CD8-positive, alpha-beta memory T cell (primary cell): ENCODE measurements at regions of chr12 and their contacts with region 1.

Region 1: DNA sequence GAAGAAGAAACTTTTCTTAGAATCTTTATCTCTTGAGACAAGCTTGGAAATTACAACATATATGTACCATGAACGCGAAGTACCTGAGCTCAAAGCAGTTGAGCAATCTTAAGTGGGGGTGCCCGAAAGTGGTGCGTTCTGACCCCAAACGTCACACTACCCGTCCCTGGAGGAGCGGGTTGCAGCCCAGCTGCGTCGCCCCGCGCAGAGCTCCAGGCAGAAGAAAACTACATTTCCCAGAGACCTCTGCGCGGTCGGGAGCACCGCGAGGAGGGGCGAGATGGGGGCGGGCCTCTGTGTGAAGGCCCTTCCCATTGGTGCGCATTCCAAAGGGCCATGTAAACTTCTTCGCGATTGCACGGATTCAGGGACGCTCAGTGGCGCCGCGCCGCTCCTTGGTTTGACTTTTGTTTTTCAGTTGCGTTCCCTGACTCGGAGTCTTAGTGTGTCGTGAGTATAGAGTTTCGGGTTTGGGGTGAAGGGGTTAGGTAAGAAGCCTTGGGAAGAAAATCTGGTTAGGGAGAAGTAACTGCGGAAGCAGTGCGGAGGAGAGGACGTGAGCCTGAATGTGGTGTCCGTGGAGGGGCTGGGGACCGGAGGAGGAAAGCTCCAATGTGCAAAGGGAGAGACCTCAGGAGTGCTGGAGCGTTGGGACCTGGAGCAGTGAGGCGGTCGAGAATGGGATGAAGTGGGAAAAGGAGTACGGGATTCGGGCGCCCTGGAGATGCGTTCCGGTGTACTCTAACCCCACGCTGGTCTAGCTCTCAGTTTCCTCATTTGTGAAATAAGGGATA is at the start of gene CCDC77:
- DNase-seq: peak; percentile 86 to 96 (median 93)
- H3K4me3 ChIP-seq: peak within 1 kb of the TSS; percentile 90
- H3K4me3 Mint-ChIP-seq: no peak within 1 kb of the TSS
- H3K27ac ChIP-seq: peak within 1 kb of the TSS; percentile 62
- H3K27ac Mint-ChIP-seq: no peak within 1 kb of the TSS
- H3K4me1 ChIP-seq: peaks cover 14% of the 10 kb centered on the region
- H3K4me1 Mint-ChIP-seq: no peaks in the 10 kb centered on the region
- H3K27me3 ChIP-seq: no peaks in the 10 kb centered on the region
- H3K27me3 Mint-ChIP-seq: peaks cover 0 to 1% of the 10 kb centered on the region in 2 donors
- total RNA-seq, gene CCDC77: 14.0 to 14.7 TPM

Region 2: GRCh38 chr12:389139-390096 is 12.0 kb before region 1 on chr12 and contains the start of gene KDM5A:
- CTCF ChIA-PET with region 1: interaction called, 25 read pairs
- POLR2A ChIA-PET with region 1: interaction called, 33 read pairs
- DNase-seq: peak; percentile 86 to 94 (median 92)
- H3K4me3 ChIP-seq: peak within 1 kb of the TSS; percentile 78
- H3K4me3 Mint-ChIP-seq: peak within 1 kb of the TSS; percentile 93 to 100 (median 97)
- H3K27ac ChIP-seq: peak within 1 kb of the TSS; percentile 94
- H3K27ac Mint-ChIP-seq: peak within 1 kb of the TSS; percentile 98 to 100 (median 99)
- H3K4me1 ChIP-seq: peaks cover 44% of the 10 kb centered on the region
- H3K4me1 Mint-ChIP-seq: peaks cover 40 to 55% (median 53%) of the 10 kb centered on the region in 3 donors
- H3K27me3 ChIP-seq: no peaks in the 10 kb centered on the region
- H3K27me3 Mint-ChIP-seq: peaks cover 0 to 6% of the 10 kb centered on the region in 2 donors
- total RNA-seq, gene KDM5A: 71.8 to 75.6 TPM

Region 3: DNA sequence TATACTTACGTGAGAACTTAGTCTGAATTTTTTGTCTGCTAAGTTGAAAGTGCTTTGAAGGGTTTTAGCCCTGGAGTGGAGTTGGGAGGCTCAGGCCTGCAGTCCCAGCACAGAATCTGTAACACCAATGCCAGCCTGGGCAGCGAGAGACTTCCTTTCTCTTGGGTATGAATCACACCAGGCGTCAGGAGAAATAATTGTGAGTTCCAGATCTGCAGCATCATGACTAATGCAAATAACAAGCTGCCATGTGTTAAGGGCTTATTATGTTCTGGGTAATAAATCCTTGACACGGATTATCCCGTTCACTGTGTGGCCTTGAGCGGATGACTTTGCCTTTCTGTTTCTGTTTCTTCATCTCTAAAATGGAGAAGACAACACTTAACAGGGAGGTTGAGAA is 128.9 kb after region 1 on chr12:
- CTCF ChIA-PET with region 1: no interaction called
- POLR2A ChIA-PET with region 1: no interaction called
- DNase-seq: no peak
- H3K4me3 ChIP-seq: no peak overlapping the region
- H3K4me3 Mint-ChIP-seq: no peak overlapping the region
- H3K27ac ChIP-seq: no peak overlapping the region
- H3K27ac Mint-ChIP-seq: no peak overlapping the region
- H3K4me1 ChIP-seq: no peaks in the 10 kb centered on the region
- H3K4me1 Mint-ChIP-seq: peaks cover 0 to 2% (median 0%) of the 10 kb centered on the region in 3 donors
- H3K27me3 ChIP-seq: no peaks in the 10 kb centered on the region
- H3K27me3 Mint-ChIP-seq: no peaks in the 10 kb centered on the region

Region 4: DNA sequence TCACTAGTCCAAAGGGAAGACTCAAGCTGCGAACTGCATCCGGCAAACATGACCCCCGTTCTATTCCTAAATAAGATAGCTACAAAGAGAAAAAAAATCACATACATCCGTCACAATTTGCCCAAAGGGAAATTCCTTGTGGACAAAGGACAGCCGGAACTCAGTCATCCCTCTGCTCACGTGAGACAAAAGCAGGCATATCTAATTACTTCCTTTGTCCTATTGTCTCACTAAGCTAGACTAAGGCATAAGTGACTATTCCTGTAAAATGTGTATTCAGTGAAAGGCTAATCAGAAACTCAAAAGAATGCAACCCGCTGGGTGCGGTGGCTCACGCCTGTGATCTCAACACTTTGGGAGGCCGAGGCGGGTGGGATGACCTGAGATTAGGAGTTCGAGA is 289.0 kb after region 1 on chr12:
- CTCF ChIA-PET with region 1: no interaction called
- POLR2A ChIA-PET with region 1: no interaction called
- DNase-seq: no peak
- H3K4me3 ChIP-seq: no peak overlapping the region
- H3K4me3 Mint-ChIP-seq: no peak overlapping the region
- H3K27ac ChIP-seq: no peak overlapping the region
- H3K27ac Mint-ChIP-seq: no peak overlapping the region
- H3K4me1 ChIP-seq: peaks cover 14% of the 10 kb centered on the region
- H3K4me1 Mint-ChIP-seq: peaks cover 12 to 19% (median 15%) of the 10 kb centered on the region in 3 donors
- H3K27me3 ChIP-seq: no peaks in the 10 kb centered on the region
- H3K27me3 Mint-ChIP-seq: no peaks in the 10 kb centered on the region